ENCODE measurements at regions of chr1 and their contacts with region 1.

Region 1: DNA sequence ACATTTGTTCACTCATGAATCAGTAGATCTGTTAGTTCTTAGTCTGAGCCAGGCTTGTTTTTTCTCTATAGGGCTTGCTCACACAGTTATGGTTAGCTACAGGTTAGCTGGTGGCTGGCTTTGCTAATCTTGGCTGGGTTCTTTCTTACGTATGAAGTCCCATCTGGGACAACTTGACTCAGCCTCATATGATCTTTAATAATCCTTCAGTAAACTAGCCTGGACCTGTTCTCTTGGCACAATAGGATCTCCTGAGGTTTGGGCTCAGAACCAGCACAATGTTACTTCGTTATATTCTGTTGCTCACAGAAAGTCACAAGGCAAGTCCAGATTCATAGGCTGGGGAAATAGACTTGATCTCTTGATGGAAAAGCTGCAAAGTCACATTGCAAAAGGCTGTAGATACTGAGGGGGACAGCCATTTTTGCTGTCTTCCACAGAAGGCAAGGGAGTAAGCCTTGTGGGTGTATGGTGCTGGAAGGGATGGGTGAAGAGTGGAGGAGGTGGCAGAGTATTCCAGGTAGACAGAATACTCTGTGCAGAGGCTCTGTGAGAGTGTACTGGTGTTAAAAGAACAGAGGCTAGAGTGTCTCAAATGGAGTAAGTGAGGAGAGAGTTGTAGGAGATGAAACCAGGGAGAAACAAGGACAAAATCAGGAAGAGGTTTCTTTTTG is 24.4 kb downstream of the EFCAB7 start:
- DNase-seq: no peak
- ATAC-seq: peak; percentile 29
- H3K4me3 ChIP-seq: no peak overlapping the region
- H3K27ac ChIP-seq: no peak overlapping the region
- H3K4me1 ChIP-seq: no peaks in the 10 kb centered on the region
- H3K27me3 ChIP-seq: no peaks in the 10 kb centered on the region

Region 2: GRCh38 chr1:62841587-62842169 is 706.1 kb before region 1 on chr1:
- intact Hi-C with region 1: loop called in 1 of 2 experiments (anchors 10 kb)
- DNase-seq: no peak
- ATAC-seq: no peak
- H3K4me3 ChIP-seq: no peak overlapping the region
- H3K27ac ChIP-seq: no peak overlapping the region
- H3K4me1 ChIP-seq: no peaks in the 10 kb centered on the region
- H3K27me3 ChIP-seq: no peaks in the 10 kb centered on the region

Measured in aorta (tissue), 5 donors.